ENCODE measurements at regions of chr5 and their contacts with region 1.

Region 1: GRCh38 chr5:129031886-129032669 is 62.5 kb upstream of the ISOC1 start:
- DNase-seq: no peak
- ATAC-seq: no peak
- H3K4me3 ChIP-seq: no peak overlapping the region
- H3K4me3 Mint-ChIP-seq: no peak overlapping the region
- H3K27ac ChIP-seq: no peak overlapping the region
- H3K27ac Mint-ChIP-seq: no peak overlapping the region
- H3K4me1 ChIP-seq: no peaks in the 10 kb centered on the region
- H3K4me1 Mint-ChIP-seq: peaks cover 0 to 2% (median 0%) of the 10 kb centered on the region in 7 donors
- H3K27me3 ChIP-seq: no peaks in the 10 kb centered on the region
- H3K27me3 Mint-ChIP-seq: peaks cover 0 to 21% (median 18%) of the 10 kb centered on the region in 5 donors

Region 2: DNA sequence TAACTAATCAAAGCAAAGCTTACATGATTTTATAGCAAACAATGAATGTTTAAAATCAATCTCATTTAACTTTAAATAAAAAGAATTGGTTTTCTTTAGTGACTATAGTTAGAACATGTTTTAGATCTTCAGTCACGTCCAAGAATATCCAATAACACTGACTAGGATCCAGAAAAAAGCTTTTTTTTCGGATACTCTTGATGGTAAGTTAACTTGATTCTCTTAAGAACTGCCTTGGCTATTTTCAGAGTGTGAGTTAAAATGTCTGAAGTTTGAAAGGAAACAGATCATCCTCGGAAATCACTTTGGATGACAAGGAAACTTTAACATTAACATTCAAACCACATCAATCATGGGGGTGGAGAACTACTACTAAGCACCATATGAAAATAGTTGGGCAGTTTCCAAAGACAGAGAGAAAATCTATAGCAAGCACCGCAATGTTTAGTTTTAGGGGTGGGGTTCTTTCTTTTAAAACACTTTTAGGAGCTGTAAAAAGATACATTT is 150.5 kb before region 1 on chr5:
- CTCF ChIA-PET with region 1: no interaction called
- POLR2A ChIA-PET with region 1: no interaction called
- intact Hi-C with region 1: no loop called
- DNase-seq: no peak
- ATAC-seq: no peak
- H3K4me3 ChIP-seq: no peak overlapping the region
- H3K4me3 Mint-ChIP-seq: no peak overlapping the region
- H3K27ac ChIP-seq: no peak overlapping the region
- H3K27ac Mint-ChIP-seq: no peak overlapping the region
- H3K4me1 ChIP-seq: no peaks in the 10 kb centered on the region
- H3K4me1 Mint-ChIP-seq: no peaks in the 10 kb centered on the region
- H3K27me3 ChIP-seq: no peaks in the 10 kb centered on the region
- H3K27me3 Mint-ChIP-seq: peaks cover 0 to 8% (median 0%) of the 10 kb centered on the region in 5 donors

Region 3: DNA sequence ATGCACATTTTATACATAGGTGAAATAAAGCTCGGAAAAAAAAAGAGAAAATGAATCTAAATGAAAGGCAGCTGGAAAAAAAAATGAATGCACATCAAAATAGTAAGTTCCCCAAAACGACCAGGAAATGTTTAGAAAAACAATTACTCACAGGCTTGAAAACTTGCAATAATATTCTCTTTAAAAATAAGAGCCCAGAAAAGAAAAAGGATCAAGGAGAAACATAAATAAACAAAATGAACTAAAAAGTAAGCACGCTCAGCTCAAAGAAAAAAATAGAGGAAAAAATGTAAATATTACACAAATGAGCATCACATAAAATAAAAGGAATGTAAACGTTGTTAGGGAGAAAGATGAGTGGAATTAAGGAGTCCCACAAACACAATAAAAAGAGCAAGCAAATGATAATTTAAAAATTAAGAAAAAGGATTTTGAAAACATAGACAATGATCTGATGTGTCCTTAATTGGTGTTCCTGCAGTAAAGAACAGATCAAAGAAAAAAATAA is 12.6 kb before region 1 on chr5:
- CTCF ChIA-PET with region 1: no interaction called
- POLR2A ChIA-PET with region 1: no interaction called
- intact Hi-C with region 1: loop called in 1 of 2 experiments (anchors 1 kb)
- DNase-seq: no peak
- ATAC-seq: no peak
- H3K4me3 ChIP-seq: no peak overlapping the region
- H3K4me3 Mint-ChIP-seq: no peak overlapping the region
- H3K27ac ChIP-seq: no peak overlapping the region
- H3K27ac Mint-ChIP-seq: no peak overlapping the region
- H3K4me1 ChIP-seq: no peaks in the 10 kb centered on the region
- H3K4me1 Mint-ChIP-seq: no peaks in the 10 kb centered on the region
- H3K27me3 ChIP-seq: no peaks in the 10 kb centered on the region
- H3K27me3 Mint-ChIP-seq: peaks cover 0 to 18% (median 15%) of the 10 kb centered on the region in 5 donors

Region 4: DNA sequence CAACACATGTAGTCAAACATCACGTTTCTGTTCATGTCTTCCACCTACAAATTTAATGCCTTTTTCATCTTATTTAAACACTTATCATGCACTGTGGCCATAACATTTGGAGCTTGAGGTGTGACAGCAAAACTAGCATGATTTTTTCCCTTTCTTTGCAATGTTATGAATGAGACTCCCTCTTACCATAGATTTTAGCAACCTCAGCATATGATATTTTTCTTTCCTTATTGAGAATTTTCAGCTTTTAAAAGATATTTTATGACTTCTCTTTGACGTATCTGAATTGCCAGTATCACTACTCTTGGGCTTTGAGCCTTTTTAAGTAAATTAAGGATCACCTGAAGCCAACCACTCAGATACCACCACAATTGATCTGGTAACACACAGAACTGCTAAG is 29.8 kb after region 1 on chr5:
- CTCF ChIA-PET with region 1: no interaction called
- POLR2A ChIA-PET with region 1: no interaction called
- intact Hi-C with region 1: no loop called
- DNase-seq: no peak
- ATAC-seq: no peak
- H3K4me3 ChIP-seq: no peak overlapping the region
- H3K4me3 Mint-ChIP-seq: no peak overlapping the region
- H3K27ac ChIP-seq: no peak overlapping the region
- H3K27ac Mint-ChIP-seq: no peak overlapping the region
- H3K4me1 ChIP-seq: no peaks in the 10 kb centered on the region
- H3K4me1 Mint-ChIP-seq: no peaks in the 10 kb centered on the region
- H3K27me3 ChIP-seq: no peaks in the 10 kb centered on the region
- H3K27me3 Mint-ChIP-seq: peaks cover 5 to 39% (median 24%) of the 10 kb centered on the region in 5 donors

Region 5: GRCh38 chr5:129191633-129192032 is 159.6 kb after region 1 on chr5:
- CTCF ChIA-PET with region 1: no interaction called
- POLR2A ChIA-PET with region 1: no interaction called
- intact Hi-C with region 1: no loop called
- DNase-seq: no peak
- ATAC-seq: no peak
- H3K4me3 ChIP-seq: no peak overlapping the region
- H3K4me3 Mint-ChIP-seq: no peak overlapping the region
- H3K27ac ChIP-seq: no peak overlapping the region
- H3K27ac Mint-ChIP-seq: no peak overlapping the region
- H3K4me1 ChIP-seq: no peaks in the 10 kb centered on the region
- H3K4me1 Mint-ChIP-seq: no peaks in the 10 kb centered on the region
- H3K27me3 ChIP-seq: no peaks in the 10 kb centered on the region
- H3K27me3 Mint-ChIP-seq: peaks cover 0 to 7% (median 0%) of the 10 kb centered on the region in 5 donors

Measured in naive thymus-derived CD4-positive, alpha-beta T cell (primary cell).